Activated CD4-positive, alpha-beta T cell treated with anti-CD3 and anti-CD28 coated beads for 36 hours (primary cell): ENCODE measurements at regions of chr3 and their contacts with region 1.

Region 1: GRCh38 chr3:197256836-197257444 is 41.5 kb downstream of the DLG1 start:
- DNase-seq: peak; percentile 50
- ATAC-seq: no peak
- H3K4me3 Mint-ChIP-seq: no peak overlapping the region
- H3K27ac Mint-ChIP-seq: no peak overlapping the region
- H3K4me1 Mint-ChIP-seq: peaks cover 68% of the 10 kb centered on the region
- H3K27me3 Mint-ChIP-seq: no peaks in the 10 kb centered on the region

Region 2: GRCh38 chr3:196849180-196849741 is 407.7 kb before region 1 on chr3:
- CTCF ChIA-PET with region 1: no interaction called
- POLR2A ChIA-PET with region 1: no interaction called
- intact Hi-C with region 1: no loop called
- DNase-seq: no peak
- ATAC-seq: no peak
- H3K4me3 Mint-ChIP-seq: no peak overlapping the region
- H3K27ac Mint-ChIP-seq: no peak overlapping the region
- H3K4me1 Mint-ChIP-seq: peaks cover 2% of the 10 kb centered on the region
- H3K27me3 Mint-ChIP-seq: peaks cover 2% of the 10 kb centered on the region

Region 3: GRCh38 chr3:197224034-197224444 is 32.9 kb before region 1 on chr3:
- CTCF ChIA-PET with region 1: interaction called, 52 read pairs
- POLR2A ChIA-PET with region 1: no interaction called
- intact Hi-C with region 1: loop called in 1 of 2 experiments (anchors 5 kb)
- DNase-seq: no peak
- ATAC-seq: peak; percentile 66
- H3K4me3 Mint-ChIP-seq: no peak overlapping the region
- H3K27ac Mint-ChIP-seq: no peak overlapping the region
- H3K4me1 Mint-ChIP-seq: peaks cover 32% of the 10 kb centered on the region
- H3K27me3 Mint-ChIP-seq: no peaks in the 10 kb centered on the region

Region 4: GRCh38 chr3:197242784-197243432 is 14.0 kb before region 1 on chr3:
- CTCF ChIA-PET with region 1: interaction called, 22 read pairs
- POLR2A ChIA-PET with region 1: no interaction called
- intact Hi-C with region 1: no loop called
- DNase-seq: no peak
- ATAC-seq: no peak
- H3K4me3 Mint-ChIP-seq: no peak overlapping the region
- H3K27ac Mint-ChIP-seq: no peak overlapping the region
- H3K4me1 Mint-ChIP-seq: peaks cover 32% of the 10 kb centered on the region
- H3K27me3 Mint-ChIP-seq: no peaks in the 10 kb centered on the region

Region 5: DNA sequence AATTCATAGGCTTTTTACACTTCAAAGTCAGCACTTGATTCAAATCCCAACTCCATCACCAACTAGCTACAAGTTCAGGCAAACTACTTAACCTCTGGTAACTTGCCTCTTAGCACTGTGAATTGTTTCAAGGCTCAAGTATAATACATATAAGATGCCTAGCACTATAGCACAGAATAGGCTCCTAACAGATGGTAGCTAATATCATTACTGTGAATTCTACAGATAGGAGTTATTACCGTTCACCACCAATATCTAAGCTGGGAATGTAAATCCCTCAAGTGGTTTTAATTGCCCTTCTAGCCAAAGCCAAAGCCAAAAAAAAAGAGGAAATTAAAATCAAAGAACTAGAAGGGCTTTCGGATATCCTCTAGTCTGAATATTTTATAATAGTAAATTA is 26.1 kb after region 1 on chr3:
- CTCF ChIA-PET with region 1: interaction called, 13 read pairs
- POLR2A ChIA-PET with region 1: no interaction called
- intact Hi-C with region 1: no loop called
- DNase-seq: no peak
- ATAC-seq: no peak
- H3K4me3 Mint-ChIP-seq: no peak overlapping the region
- H3K27ac Mint-ChIP-seq: no peak overlapping the region
- H3K4me1 Mint-ChIP-seq: peaks cover 28% of the 10 kb centered on the region
- H3K27me3 Mint-ChIP-seq: no peaks in the 10 kb centered on the region

Region 6: DNA sequence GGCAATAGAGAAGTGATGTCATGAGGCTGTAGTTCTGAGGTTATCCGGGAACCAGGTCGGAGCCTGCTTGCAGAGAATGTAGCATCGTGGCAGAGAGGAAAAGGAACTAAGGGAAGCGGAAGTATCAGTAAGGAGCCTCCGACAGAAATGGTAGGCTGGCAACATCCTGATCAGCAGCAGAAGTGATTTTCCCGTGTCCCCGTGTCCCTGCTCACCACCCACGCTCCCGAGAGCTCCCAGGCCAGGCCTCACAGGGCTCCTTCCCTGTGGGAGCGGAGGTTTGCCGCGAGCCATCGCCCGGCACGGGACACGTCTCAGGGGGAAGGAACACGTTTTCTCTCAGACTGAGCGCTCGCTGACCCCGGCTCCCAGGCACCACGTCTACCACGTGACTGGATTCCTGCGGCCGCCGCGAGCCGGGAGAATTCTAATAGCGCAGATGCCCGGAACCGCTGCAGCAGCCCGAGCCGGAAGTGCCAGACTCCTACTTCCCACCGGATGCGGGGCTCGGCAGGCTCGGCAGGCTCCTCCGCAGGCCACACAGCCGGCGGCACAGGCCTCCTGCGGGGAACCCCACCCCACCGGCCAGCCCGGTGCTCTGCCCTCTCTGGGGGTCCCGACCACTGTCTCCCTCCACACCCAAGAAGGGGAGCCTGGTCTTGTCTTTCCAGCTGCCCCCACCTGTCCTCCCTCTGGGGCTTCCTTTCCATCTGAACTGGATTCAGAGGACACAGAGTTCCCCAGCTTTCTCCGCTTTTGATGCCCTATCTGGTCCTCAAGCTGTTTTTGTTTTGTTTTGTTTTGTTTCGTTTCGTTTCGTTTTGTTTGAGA is 199.5 kb after region 1 on chr3:
- CTCF ChIA-PET with region 1: interaction called, 24 read pairs
- POLR2A ChIA-PET with region 1: no interaction called
- intact Hi-C with region 1: loop called (anchors 1 to 2 kb)
- DNase-seq: peak; percentile 77
- ATAC-seq: peak; percentile 55
- H3K4me3 Mint-ChIP-seq: peak overlapping the region; percentile 76
- H3K27ac Mint-ChIP-seq: peak overlapping the region; percentile 93
- H3K4me1 Mint-ChIP-seq: peaks cover 21% of the 10 kb centered on the region
- H3K27me3 Mint-ChIP-seq: peaks cover 6% of the 10 kb centered on the region

Region 7: DNA sequence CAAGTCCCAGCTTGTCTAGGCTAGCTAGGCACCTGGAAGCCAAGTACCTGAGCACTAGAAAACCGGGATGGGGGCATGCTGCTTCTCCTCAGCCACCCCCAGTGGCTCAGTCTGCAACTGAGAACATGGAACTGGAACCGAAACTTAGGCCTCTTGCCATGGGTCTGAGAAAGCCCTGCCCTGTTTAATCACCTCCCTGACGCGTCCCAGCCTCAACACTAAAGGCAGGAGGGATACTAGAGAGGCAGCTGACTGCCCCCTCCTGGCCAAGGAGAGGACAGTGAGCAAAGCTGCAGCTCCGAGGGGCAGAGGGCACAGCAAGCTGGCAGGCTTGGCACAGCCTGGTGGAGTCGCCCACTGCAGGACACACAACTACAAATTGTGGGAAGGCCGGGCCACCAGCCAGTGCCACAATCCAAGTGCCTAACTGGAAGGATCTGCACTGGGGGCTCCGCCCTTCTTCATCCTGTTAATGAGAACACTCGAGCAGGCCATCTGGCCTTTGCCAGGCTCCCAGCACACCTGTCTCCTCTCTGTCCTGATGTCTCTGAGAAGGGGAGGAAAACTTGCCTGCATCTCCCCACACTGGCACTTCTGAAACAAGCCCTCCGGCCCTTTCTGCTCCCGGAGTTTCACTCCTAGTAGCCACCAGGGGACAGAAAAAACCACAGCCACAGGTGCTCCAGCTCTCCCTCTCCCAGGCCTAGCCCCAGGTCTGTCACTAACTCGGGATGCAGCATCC is 245.1 kb after region 1 on chr3:
- CTCF ChIA-PET with region 1: interaction called, 33 read pairs
- POLR2A ChIA-PET with region 1: no interaction called
- intact Hi-C with region 1: loop called (anchors 1 to 2 kb)
- DNase-seq: peak; percentile 77
- ATAC-seq: peak; percentile 94
- H3K4me3 Mint-ChIP-seq: no peak overlapping the region
- H3K27ac Mint-ChIP-seq: no peak overlapping the region
- H3K4me1 Mint-ChIP-seq: no peaks in the 10 kb centered on the region
- H3K27me3 Mint-ChIP-seq: no peaks in the 10 kb centered on the region